Natural killer cell (primary cell): ENCODE measurements at regions of chr1 and their contacts with region 1.

Region 1: DNA sequence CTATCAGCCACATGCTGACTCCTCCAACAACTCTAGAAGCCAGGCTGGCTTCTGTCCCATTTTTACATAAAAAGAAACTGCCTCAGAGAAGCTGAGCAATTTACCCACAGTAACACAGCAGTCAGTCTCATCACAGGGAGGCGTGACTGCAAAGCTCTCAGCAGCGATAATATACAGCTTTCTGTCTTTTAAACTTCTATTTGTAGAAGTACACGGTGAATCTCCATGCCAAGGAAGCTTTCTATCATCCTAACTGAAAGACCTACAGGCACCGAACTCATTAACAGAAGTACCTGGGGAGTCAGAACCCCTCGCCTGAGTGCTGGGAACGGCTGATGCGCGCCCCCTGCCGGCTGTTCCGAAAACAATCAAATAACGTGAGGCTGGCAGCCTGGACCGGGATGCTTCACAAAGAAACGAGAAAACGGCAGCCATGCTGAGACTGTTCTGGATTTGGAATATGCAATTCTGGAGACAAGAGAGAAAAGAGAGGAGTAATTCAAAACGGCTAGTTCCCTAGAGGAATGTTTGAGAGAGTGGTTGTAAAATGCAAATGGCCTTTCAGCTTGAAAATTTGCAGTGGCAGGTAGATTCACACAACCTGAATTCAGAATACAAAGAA is 43.5 kb upstream of the RAB4A start:
- DNase-seq: peak; percentile 72 to 88
- ATAC-seq: peak; percentile 71 to 81 (median 77)
- H3K4me3 ChIP-seq: no peak overlapping the region
- H3K4me3 Mint-ChIP-seq: no peak overlapping the region
- H3K27ac ChIP-seq: no peak overlapping the region
- H3K27ac Mint-ChIP-seq: no peak overlapping the region
- H3K4me1 ChIP-seq: peaks cover 8% of the 10 kb centered on the region
- H3K4me1 Mint-ChIP-seq: peaks cover 7 to 10% of the 10 kb centered on the region in 2 donors
- H3K27me3 ChIP-seq: peaks cover 8% of the 10 kb centered on the region
- H3K27me3 Mint-ChIP-seq: peaks cover 19 to 34% of the 10 kb centered on the region in 2 donors
- CTCF ChIP-seq: peak; percentile 97

Region 2: DNA sequence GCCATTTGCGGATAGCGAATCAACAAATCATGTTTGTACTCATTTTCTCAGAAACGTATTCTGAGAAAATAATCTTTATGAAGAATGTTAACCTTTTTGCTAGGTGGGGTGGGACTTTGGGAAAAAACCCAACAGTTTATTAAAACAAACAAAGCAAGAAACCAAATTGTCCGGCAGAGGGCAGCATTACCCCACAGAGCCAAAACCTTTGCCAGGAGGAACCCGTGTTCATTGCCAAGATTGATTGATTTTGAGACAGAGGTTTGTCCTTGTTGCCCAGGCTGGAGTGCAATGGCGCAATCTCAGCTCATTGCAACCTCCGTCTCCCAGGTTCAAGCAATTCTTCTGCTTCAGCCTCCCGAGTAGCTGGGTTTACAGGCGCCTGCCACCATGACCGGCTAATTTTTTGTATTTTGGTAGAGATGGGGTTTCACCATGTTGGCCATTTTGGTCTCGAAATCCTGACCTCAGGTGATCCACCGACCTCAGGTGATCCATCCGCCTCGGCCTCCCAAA is 563.0 kb before region 1 on chr1:
- intact Hi-C with region 1: loop called (anchors 1 kb)
- DNase-seq: peak; percentile 64 to 89
- ATAC-seq: peak; percentile 46 to 65 (median 61)
- H3K4me3 ChIP-seq: no peak overlapping the region
- H3K4me3 Mint-ChIP-seq: no peak overlapping the region
- H3K27ac ChIP-seq: no peak overlapping the region
- H3K27ac Mint-ChIP-seq: no peak overlapping the region
- H3K4me1 ChIP-seq: peaks cover 3% of the 10 kb centered on the region
- H3K4me1 Mint-ChIP-seq: no peaks in the 10 kb centered on the region
- H3K27me3 ChIP-seq: no peaks in the 10 kb centered on the region
- H3K27me3 Mint-ChIP-seq: peaks cover 8 to 11% of the 10 kb centered on the region in 2 donors
- CTCF ChIP-seq: peak; percentile 86

Region 3: DNA sequence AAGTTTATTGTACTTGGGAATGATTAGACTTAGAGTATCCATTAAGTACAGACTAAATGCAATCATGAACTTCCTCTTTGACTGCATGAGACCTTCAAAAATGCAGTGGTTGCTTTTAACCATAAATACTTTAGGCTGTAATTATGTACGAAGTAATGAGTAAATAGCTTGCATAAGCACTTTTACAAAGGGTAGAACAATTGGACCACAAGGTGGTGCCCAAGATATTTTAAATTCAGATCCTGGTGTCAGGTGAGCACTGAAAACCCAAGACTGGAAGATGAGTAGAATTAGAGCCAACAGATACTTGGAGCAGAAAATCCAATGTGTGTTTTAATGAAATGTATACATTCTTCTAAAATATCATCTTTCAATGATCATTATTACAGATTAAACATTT is 535.5 kb before region 1 on chr1:
- intact Hi-C with region 1: loop called (anchors 1 kb)
- DNase-seq: peak in 1 of 2 donors; percentile 70
- ATAC-seq: no peak
- H3K4me3 ChIP-seq: no peak overlapping the region
- H3K4me3 Mint-ChIP-seq: no peak overlapping the region
- H3K27ac ChIP-seq: no peak overlapping the region
- H3K27ac Mint-ChIP-seq: no peak overlapping the region
- H3K4me1 ChIP-seq: no peaks in the 10 kb centered on the region
- H3K4me1 Mint-ChIP-seq: no peaks in the 10 kb centered on the region
- H3K27me3 ChIP-seq: no peaks in the 10 kb centered on the region
- H3K27me3 Mint-ChIP-seq: peaks cover 21 to 24% of the 10 kb centered on the region in 2 donors
- CTCF ChIP-seq: no peak

Region 4: DNA sequence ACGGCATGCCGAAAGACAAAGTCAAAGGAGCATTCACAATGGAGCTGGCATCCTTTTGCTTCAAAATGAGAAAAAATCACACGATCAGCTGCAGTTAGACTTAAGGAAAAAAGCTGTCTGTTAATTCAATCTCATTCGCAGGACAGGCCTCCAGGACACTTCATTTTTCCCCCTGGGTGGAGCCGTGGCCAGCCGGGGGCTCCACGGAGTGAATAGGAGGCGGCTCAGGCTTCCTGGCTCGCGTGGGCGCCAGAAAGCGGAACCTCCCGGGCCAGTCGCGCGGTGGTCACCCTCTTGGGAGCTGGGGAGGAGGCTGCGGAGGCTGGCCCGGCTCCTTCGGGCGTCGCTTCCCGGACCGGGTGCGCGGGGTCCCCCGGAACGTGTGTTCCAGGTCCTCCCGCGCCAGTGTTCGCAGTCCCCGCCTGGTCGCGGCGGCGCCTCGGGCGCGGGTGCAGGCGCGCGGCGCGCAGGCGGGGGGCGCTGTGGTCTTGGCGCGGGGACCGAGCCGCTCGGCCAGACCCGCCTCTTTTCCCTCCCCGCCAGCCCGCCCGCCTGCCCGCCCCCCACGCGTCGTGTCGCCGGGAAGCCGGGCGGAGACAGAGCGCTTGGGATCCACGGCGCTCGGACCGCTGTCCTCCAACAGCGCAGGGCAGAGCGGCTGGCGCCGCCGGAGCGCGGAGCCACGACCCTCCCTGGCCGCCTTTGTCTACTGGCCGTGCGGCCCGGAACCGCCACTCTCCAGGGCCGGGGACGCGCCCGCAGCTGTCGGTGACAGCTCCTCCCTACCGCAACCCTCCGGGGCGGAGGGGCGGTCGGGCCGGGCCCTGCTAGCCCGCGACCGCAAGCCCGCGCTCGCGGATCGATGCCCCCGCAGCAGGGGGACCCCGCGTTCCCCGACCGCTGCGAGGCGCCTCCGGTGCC is 492.3 kb before region 1 on chr1 and contains the start of gene RHOU:
- intact Hi-C with region 1: loop called (anchors 1 kb)
- DNase-seq: peak; percentile 66 to 85
- ATAC-seq: peak; percentile 91 to 92 (median 92)
- H3K4me3 ChIP-seq: peak within 1 kb of the TSS; percentile 34
- H3K4me3 Mint-ChIP-seq: peak within 1 kb of the TSS; percentile 90
- H3K27ac ChIP-seq: no peak within 1 kb of the TSS
- H3K27ac Mint-ChIP-seq: peak within 1 kb of the TSS in 1 of 2 donors; percentile 57
- H3K4me1 ChIP-seq: peaks cover 26% of the 10 kb centered on the region
- H3K4me1 Mint-ChIP-seq: peaks cover 6 to 13% of the 10 kb centered on the region in 2 donors
- H3K27me3 ChIP-seq: peaks cover 2% of the 10 kb centered on the region
- H3K27me3 Mint-ChIP-seq: peaks cover 20 to 39% of the 10 kb centered on the region in 2 donors
- CTCF ChIP-seq: peak; percentile 69
- total RNA-seq, gene RHOU: 0.33 to 1.6 (median 0.82) TPM